Activated B cell treated with CpG ODN at 0.5 μM for 24 hours (primary cell): ENCODE measurements at regions of chr12 and their contacts with region 1.

Region 1: DNA sequence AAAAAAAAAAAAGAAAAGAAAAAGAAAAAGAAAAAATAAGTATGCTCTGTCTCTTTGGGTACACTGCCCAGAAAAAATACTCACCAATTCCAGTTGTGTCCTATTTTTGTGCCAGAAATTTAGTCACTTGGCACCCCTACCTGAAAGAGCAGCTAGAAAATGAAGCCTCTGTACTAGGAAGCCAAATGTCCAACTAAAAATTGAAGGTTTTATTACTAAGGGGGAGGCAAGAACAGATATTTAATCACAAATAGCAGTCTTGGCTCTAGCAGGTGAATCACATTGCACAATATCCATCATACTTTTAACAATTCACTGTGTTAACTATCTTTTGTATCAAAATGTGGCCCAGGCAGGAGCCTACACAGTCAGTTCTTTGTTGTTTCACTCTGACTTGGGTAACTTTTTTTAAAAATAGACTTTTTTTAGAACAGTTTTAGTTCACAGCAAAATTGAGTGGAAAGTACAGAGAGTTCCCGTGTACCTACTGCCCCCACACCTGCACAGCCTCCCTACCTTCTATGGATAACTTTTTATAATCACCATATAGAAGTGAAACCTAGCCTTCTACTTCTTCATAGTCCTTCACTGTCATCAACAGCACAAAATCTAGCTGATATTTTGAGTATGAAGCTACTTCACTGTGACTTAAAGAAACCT is 87.1 kb upstream of the ATF7IP start:
- DNase-seq: no peak
- ATAC-seq: peak; percentile 32
- H3K4me3 Mint-ChIP-seq: peak overlapping the region; percentile 24
- H3K27ac Mint-ChIP-seq: peak overlapping the region; percentile 85
- H3K4me1 Mint-ChIP-seq: peaks cover 76% of the 10 kb centered on the region
- H3K27me3 Mint-ChIP-seq: no peaks in the 10 kb centered on the region
- CTCF ChIP-seq: no peak

Region 2: GRCh38 chr12:14247166-14247565 is 31.3 kb before region 1 on chr12:
- CTCF ChIA-PET with region 1: no interaction called
- POLR2A ChIA-PET with region 1: no interaction called
- intact Hi-C with region 1: no loop called
- DNase-seq: no peak
- ATAC-seq: no peak
- H3K4me3 Mint-ChIP-seq: no peak overlapping the region
- H3K27ac Mint-ChIP-seq: no peak overlapping the region
- H3K4me1 Mint-ChIP-seq: peaks cover 28% of the 10 kb centered on the region
- H3K27me3 Mint-ChIP-seq: no peaks in the 10 kb centered on the region
- CTCF ChIP-seq: no peak

Region 3: DNA sequence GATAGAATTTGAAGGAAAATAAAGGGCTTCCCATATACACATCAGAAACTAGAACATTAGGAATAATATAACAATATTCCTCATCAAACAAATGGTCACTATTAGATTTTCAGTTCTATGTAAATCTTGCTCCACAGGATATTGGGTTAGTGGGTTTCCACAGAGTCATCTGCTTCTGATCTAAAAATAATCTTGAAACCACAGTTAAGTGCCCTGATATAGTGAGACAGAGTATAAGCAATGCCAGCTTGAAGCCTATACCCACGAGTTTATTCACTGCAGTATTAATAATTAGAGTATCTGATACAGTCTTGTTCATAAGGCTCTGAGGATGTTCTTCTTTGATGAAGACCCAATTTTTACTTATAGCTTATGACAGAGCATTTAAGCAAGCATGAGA is 12.5 kb after region 1 on chr12:
- CTCF ChIA-PET with region 1: interaction called, 3 read pairs
- POLR2A ChIA-PET with region 1: interaction called, 18 read pairs
- intact Hi-C with region 1: loop called (anchors 1 kb)
- DNase-seq: no peak
- ATAC-seq: peak; percentile 90
- H3K4me3 Mint-ChIP-seq: peak overlapping the region; percentile 29
- H3K27ac Mint-ChIP-seq: peak overlapping the region; percentile 78
- H3K4me1 Mint-ChIP-seq: peaks cover 41% of the 10 kb centered on the region
- H3K27me3 Mint-ChIP-seq: no peaks in the 10 kb centered on the region
- CTCF ChIP-seq: no peak

Region 4: DNA sequence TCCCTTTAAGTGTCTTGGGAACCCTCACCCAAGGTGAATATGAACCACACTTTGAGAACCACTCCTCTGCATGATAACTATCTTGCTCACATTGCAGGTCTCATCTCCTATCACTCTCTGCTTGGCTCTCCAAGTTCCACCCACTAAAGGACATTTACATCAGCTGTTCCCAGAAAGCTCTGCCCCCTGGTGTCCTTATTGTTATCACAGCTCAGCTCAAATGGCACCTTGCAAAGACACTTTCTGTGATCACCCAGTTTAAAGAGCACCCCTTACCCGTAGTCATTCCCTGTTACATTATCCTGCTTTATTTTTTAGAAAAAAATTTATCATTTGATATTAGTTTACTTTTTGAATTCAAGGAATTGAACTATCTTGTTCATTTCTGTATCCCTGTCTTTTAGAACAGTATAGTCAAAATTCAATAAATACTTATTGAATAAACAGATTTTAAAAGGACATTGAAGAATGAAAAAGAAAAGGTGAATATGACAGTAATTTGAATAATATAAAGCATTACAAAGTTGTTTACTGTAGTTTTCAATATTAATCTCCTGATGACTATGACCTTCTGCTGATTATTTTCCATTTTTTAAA is 438.5 kb after region 1 on chr12:
- CTCF ChIA-PET with region 1: no interaction called
- POLR2A ChIA-PET with region 1: no interaction called
- intact Hi-C with region 1: no loop called
- DNase-seq: no peak
- ATAC-seq: peak; percentile 75
- H3K4me3 Mint-ChIP-seq: no peak overlapping the region
- H3K27ac Mint-ChIP-seq: no peak overlapping the region
- H3K4me1 Mint-ChIP-seq: peaks cover 2% of the 10 kb centered on the region
- H3K27me3 Mint-ChIP-seq: peaks cover 8% of the 10 kb centered on the region
- CTCF ChIP-seq: peak; percentile 15